ENCODE measurements at regions of chrX and their contacts with region 1.

Region 1: DNA sequence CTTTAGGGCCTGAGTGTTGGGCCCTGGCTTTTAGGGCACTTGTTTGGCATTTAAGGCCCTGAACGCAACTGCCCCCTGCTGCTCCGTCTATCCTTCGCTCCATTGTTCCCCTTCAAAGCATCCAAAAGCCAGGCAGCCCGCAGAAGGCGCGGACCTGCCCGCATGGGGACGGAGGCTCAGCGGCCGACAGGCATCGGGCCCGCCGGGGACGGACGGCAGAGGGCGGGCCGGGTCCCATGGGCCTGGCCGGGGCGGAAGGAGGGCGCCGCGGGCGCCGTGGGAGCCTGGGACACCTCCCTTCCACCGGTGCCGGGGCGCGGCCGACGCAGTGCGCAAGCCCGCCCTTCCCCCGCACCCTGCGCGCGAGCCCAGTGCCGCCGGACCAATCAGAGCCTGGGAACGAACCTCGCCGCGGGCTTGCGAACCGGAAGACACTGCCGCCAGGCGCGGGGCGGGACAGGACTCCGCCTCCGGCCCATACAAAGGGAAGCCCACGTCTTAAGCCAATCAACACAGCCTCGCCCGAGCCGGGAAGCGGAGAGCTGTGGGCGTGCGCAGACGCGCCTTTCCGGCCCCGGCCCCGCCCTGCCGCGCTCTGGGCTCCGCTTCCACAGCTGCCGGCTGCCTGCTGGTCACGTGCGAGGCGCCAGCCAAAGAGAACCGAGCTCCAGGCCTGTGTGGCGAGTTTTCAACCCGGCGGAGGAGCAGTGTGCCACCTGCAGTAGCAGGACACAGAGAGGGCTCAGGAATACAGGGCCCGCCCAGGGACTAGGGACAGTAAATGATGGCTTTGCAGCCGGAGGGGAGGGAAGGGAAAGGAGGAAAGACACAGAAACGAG is 2.1 kb upstream of the ARHGAP4 start:
- DNase-seq: peak; percentile 91
- ATAC-seq: peak; percentile 78
- H3K4me3 ChIP-seq: peak overlapping the region; percentile 74
- H3K27ac ChIP-seq: peak overlapping the region; percentile 98
- H3K4me1 ChIP-seq: peaks cover 9% of the 10 kb centered on the region; the same call in 1 of the 2 replicates
- H3K27me3 ChIP-seq: no peaks in the 10 kb centered on the region
- CTCF ChIP-seq: 0 out of 6 replicates have a peak, but pooled peaks of 2 of the 3 experiments have one; percentile 3 to 7
- EP300 ChIP-seq: no peak
- POLR2A ChIP-seq: peak; percentile 74; the same call in 1 of the 2 replicates
- RAD21 ChIP-seq: no peak

Region 2: GRCh38 chrX:153735274-153735673 is 192.9 kb before region 1 on chrX:
- CTCF ChIA-PET with region 1: no interaction called
- POLR2A ChIA-PET with region 1: no interaction called
- RAD21 ChIA-PET with region 1: no interaction called
- SMC1A ChIA-PET with region 1: no interaction called
- in situ Hi-C with region 1: no loop called
- intact Hi-C with region 1: no loop called
- DNase-seq: no peak
- ATAC-seq: peak; percentile 91
- H3K4me3 ChIP-seq: no peak overlapping the region
- H3K27ac ChIP-seq: no peak overlapping the region
- H3K4me1 ChIP-seq: no peaks in the 10 kb centered on the region
- H3K27me3 ChIP-seq: no peaks in the 10 kb centered on the region
- CTCF ChIP-seq: peak in 1 of 3 experiments; percentile 18; a peak in 1 of 6 replicates
- EP300 ChIP-seq: no peak
- POLR2A ChIP-seq: no peak
- RAD21 ChIP-seq: no peak

Region 3: GRCh38 chrX:153794018-153794896 is 133.9 kb before region 1 on chrX and contains the starts of genes IDH3G and SSR4:
- CTCF ChIA-PET with region 1: interaction called, 6 read pairs
- POLR2A ChIA-PET with region 1: interaction called, 6 read pairs
- RAD21 ChIA-PET with region 1: interaction called, 5 read pairs
- SMC1A ChIA-PET with region 1: interaction called, 3 read pairs
- in situ Hi-C with region 1: no loop called
- intact Hi-C with region 1: loop called (anchors 2 kb)
- DNase-seq: peak; percentile 81
- ATAC-seq: peak; percentile 93
- H3K4me3 ChIP-seq: peak within 1 kb of the TSS; percentile 82
- H3K27ac ChIP-seq: peak within 1 kb of the TSS; percentile 82
- H3K4me1 ChIP-seq: peaks cover 4% of the 10 kb centered on the region; the same call in 1 of the 2 replicates
- H3K27me3 ChIP-seq: no peaks in the 10 kb centered on the region
- CTCF ChIP-seq: no peak
- EP300 ChIP-seq: no peak
- POLR2A ChIP-seq: peak; percentile 93
- RAD21 ChIP-seq: no peak
- polyA plus RNA-seq, gene IDH3G: 26.3 to 34.4 TPM
- polyA plus RNA-seq, gene SSR4: 351 to 521 TPM

Region 4: DNA sequence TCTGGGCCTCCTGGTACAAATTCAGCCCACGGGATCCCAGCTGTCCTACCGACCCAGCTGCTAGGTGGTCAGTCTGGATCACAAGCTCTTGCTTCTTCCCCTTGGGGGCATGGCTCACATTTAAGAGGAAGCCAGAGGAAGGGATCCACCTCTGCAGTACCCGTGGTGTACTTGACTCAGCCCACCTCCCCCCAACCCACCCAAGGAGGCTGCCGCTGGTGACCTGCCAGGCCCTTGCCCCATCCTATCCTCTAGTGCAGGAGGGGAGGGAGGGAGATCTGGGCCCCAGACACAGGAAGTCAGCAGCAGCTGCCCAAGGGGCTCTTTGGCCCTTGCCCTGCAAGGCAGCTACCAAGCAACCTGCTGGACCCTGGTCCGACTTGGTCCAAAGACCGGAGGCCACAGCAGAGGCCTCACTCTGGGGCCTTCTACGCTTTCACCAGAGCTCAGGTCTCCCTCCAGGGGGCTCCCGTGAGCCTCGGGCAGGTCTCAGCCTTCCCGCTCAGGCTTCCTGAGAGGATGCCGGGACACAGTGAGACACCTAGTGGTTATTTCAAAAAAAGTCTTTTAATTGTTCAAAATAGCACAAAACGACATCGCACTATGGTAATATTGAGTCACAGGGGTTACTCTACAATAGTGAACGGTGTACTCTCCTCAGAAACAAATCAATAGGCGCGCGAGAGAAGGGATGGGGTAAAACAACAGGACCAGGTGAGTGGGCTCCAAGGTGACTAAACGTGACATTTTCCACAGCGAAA is 19.0 kb after region 1 on chrX:
- CTCF ChIA-PET with region 1: interaction called, 172 read pairs
- POLR2A ChIA-PET with region 1: interaction called, 9 read pairs
- RAD21 ChIA-PET with region 1: interaction called, 59 read pairs
- SMC1A ChIA-PET with region 1: interaction called, 61 read pairs
- in situ Hi-C with region 1: no loop called
- intact Hi-C with region 1: loop called (anchors 1 kb)
- DNase-seq: no peak
- ATAC-seq: peak; percentile 95
- H3K4me3 ChIP-seq: no peak overlapping the region
- H3K27ac ChIP-seq: no peak overlapping the region
- H3K4me1 ChIP-seq: no peaks in the 10 kb centered on the region
- H3K27me3 ChIP-seq: no peaks in the 10 kb centered on the region
- CTCF ChIP-seq: peak; percentile 95 to 97 (median 97); a peak in 5 of 6 replicates
- EP300 ChIP-seq: no peak
- POLR2A ChIP-seq: no peak; the same call in none of the 2 replicates
- RAD21 ChIP-seq: peak; percentile 62

Region 5: GRCh38 chrX:154002215-154002719 is 74.1 kb after region 1 on chrX:
- CTCF ChIA-PET with region 1: interaction called, 3 read pairs
- POLR2A ChIA-PET with region 1: interaction called, 10 read pairs
- RAD21 ChIA-PET with region 1: interaction called, 6 read pairs
- SMC1A ChIA-PET with region 1: interaction called, 5 read pairs
- in situ Hi-C with region 1: no loop called
- intact Hi-C with region 1: no loop called
- DNase-seq: no peak
- ATAC-seq: peak; percentile 84
- H3K4me3 ChIP-seq: no peak overlapping the region
- H3K27ac ChIP-seq: peak overlapping the region; percentile 72
- H3K4me1 ChIP-seq: peaks cover 15% of the 10 kb centered on the region
- H3K27me3 ChIP-seq: no peaks in the 10 kb centered on the region
- CTCF ChIP-seq: no peak
- EP300 ChIP-seq: no peak; a peak in 1 of 4 replicates
- POLR2A ChIP-seq: peak; percentile 38; the same call in 1 of the 2 replicates
- RAD21 ChIP-seq: no peak

Region 6: DNA sequence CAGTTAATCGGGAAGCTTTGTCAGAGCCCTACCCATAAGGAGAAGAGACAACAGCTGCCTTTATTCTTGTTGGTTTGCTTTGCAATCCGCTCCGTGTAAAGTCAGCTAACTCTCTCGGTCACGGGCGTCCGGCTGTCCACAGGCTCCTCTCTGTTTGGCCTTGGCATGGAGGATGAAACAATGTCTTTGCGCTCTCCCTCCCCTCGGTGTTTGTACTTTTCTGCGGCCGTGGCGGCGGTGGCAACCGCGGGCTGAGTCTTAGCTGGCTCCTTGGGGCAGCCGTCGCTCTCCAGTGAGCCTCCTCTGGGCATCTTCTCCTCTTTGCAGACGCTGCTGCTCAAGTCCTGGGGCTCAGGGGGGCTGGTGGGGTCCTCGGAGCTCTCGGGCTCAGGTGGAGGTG is 102.1 kb after region 1 on chrX:
- CTCF ChIA-PET with region 1: no interaction called
- POLR2A ChIA-PET with region 1: no interaction called
- RAD21 ChIA-PET with region 1: no interaction called
- SMC1A ChIA-PET with region 1: no interaction called
- in situ Hi-C with region 1: no loop called
- intact Hi-C with region 1: no loop called
- DNase-seq: no peak
- ATAC-seq: no peak
- H3K4me3 ChIP-seq: no peak overlapping the region
- H3K27ac ChIP-seq: no peak overlapping the region
- H3K4me1 ChIP-seq: no peaks in the 10 kb centered on the region
- H3K27me3 ChIP-seq: no peaks in the 10 kb centered on the region; a peak in 1 of 4 replicates
- CTCF ChIP-seq: no peak
- EP300 ChIP-seq: no peak
- POLR2A ChIP-seq: no peak
- RAD21 ChIP-seq: no peak